Activated CD4-positive, alpha-beta memory T cell treated with anti-CD3 and anti-CD28 coated beads, Interleukin-2, amount 10 ng/mL, durations not matched to agents 7 days and 5 days (primary cell): ENCODE measurements at regions of chr11 and their contacts with region 1.

Region 1: GRCh38 chr11:47161134-47161854 is 15.4 kb downstream of the ARFGAP2 start:
- DNase-seq: peak; percentile 64
- H3K4me3 Mint-ChIP-seq: no peak overlapping the region
- H3K27ac Mint-ChIP-seq: no peak overlapping the region
- H3K4me1 Mint-ChIP-seq: peaks cover 1% of the 10 kb centered on the region
- H3K27me3 Mint-ChIP-seq: no peaks in the 10 kb centered on the region

Region 2: DNA sequence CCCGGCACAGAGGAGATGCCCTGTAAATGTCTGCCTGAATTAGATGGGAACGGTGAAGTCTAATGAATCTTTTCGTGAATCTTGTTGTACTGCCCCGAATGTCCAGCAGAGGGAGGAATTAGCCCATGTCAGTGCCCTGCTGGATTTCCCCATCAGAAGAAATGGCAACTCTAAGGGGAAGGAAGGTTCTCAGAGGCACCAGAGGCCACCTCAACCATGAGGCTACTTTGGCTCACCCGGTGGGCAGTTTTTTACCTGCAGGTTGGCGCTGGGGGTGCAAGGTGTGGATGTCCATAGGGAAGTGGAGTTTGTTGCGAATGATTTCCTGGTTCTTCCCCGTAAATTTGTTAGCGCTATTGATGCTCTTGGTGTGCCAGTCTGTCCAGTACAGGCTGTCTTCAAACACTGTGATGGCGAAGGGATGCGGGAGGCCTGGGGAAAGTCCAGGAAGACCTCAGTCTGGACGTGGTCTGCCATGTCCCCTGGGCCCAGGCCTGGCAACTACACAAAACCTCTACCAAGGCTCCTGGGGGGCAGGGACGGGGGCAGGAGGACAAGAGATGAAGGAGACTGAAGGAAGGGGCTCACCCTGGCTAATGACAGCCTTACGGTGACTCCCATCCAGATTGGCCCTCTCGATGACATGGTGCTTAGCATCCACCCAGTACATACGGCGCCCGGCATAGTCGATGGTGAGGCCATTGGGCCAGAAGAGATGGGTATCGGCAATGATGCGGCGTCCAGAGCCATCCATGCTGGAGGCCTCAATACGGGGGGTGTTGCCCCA is 271.4 kb before region 1 on chr11:
- CTCF ChIA-PET with region 1: interaction called, 12 read pairs
- POLR2A ChIA-PET with region 1: no interaction called
- DNase-seq: peak; percentile 72
- H3K4me3 Mint-ChIP-seq: no peak overlapping the region
- H3K27ac Mint-ChIP-seq: no peak overlapping the region
- H3K4me1 Mint-ChIP-seq: no peaks in the 10 kb centered on the region
- H3K27me3 Mint-ChIP-seq: peaks cover 4% of the 10 kb centered on the region

Region 3: DNA sequence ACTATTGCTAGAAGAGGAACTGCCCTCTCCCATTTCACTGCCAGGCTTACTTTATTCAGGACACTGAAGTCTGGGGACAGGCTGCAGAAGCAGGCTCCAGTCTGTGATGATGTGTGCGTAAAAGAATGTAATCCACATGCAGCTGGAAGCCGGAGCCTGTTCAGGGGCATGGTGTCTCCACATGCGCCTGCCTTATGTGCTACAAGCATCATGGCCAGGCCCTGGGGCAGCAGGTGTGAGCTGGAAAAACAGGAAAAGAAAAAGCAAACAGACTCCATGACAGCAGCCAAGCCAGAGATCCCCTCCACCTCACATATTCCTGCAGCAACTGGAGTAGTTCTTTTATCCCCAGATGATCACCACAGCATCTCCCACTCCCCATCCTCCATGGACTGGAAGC is 18.0 kb before region 1 on chr11:
- CTCF ChIA-PET with region 1: no interaction called
- POLR2A ChIA-PET with region 1: no interaction called
- DNase-seq: no peak
- H3K4me3 Mint-ChIP-seq: no peak overlapping the region
- H3K27ac Mint-ChIP-seq: no peak overlapping the region
- H3K4me1 Mint-ChIP-seq: peaks cover 4% of the 10 kb centered on the region
- H3K27me3 Mint-ChIP-seq: no peaks in the 10 kb centered on the region

Region 4: GRCh38 chr11:47201015-47201414 is 39.7 kb after region 1 on chr11:
- CTCF ChIA-PET with region 1: no interaction called
- POLR2A ChIA-PET with region 1: no interaction called
- DNase-seq: no peak
- H3K4me3 Mint-ChIP-seq: no peak overlapping the region
- H3K27ac Mint-ChIP-seq: no peak overlapping the region
- H3K4me1 Mint-ChIP-seq: no peaks in the 10 kb centered on the region
- H3K27me3 Mint-ChIP-seq: peaks cover 7% of the 10 kb centered on the region